Activated CD4-positive, alpha-beta memory T cell treated with anti-CD3 and anti-CD28 coated beads for 36 hours (primary cell): ENCODE measurements at regions of chr6 and their contacts with region 1.

Region 1: DNA sequence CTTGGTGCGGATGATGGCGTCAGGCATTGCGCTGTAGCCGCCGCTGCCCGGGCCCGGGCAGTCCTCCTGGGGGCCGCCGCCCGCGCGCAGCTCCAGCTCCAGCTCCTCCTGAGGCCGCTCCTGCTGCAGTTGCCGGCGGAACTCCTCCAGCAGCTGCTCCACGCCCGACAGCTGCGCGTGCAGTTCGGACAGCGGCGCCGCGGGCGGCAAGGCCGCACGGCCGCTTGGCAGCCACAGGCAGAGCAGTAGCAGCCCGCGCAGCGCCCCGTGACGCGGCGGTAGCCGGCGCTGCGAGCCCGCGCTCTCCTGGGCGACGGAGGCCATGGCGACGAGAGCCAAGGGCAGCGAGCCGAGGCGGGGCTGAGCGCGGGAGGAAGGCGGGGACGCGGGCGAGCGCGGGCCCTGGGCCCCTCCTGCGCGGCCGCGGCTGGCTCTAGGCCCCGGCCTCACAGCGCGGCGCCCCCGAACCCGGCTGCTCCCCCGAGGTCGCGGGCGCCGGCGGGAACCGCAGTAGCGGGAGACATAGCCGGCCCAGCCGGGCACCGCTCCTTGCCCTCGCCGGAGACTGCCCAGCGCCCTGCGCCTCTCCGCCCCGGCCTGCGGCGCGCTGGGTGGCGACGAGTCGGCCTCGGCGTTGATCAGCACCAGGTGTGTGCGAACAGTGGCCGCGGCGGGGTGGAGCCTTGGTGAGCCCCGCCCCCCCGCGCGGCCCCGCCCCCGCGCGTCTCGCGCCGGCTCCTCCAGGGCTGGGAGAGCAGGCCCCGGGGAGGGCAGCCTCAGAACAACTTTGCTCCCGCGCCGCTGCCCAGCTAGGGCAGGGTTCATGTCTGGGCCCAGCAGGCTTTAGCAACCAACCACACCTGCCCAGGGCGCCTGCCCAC is at the start of gene LRP11:
- DNase-seq: peak; percentile 88
- H3K4me3 Mint-ChIP-seq: peak within 1 kb of the TSS; percentile 81
- H3K27ac Mint-ChIP-seq: no peak within 1 kb of the TSS
- H3K4me1 Mint-ChIP-seq: peaks cover 19% of the 10 kb centered on the region
- H3K27me3 Mint-ChIP-seq: peaks cover 2% of the 10 kb centered on the region
- total RNA-seq, gene LRP11: 6.7 to 7.2 TPM

Region 2: DNA sequence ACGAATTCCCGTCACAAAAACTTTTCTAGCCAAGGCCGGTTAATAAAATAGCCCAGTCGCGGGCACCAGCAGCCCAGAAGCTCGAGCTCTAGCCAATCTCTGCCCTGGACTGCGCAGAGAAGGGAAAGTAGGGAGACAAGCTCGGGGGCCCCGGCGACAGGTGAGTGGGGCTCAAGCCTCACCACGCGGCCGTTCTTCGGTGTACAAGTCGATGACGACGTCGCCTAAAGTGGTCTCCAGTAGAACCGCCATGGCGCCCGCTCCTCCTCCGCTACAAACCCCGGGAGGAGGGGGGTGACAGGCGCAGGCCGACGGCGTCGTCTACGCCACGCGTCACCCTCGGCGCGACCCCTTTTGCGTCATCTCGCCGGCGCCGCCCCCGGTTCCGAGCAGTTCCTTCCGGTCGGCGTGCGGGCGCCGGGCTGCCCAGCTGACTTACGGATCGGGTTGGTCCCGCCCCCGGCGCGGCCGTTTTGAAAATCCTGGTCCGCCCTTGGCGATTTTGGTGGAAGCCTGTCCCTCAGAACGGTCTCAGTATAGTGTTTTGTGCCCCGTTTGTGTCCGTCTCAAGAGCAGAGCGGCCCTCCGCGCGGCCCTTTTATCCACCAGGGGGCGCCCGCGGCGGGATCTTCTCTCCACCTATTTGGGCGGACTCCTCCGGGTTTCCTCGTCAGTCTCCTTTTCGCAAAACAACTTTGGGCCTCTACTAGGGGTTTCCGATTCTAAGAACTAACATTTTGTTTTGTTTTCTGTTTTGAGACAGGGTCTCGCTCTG is 318.0 kb before region 1 on chr6 and contains the start of gene PPIL4:
- CTCF ChIA-PET with region 1: no interaction called
- POLR2A ChIA-PET with region 1: interaction called, 3 read pairs
- intact Hi-C with region 1: loop called (anchors 5 kb)
- DNase-seq: peak; percentile 97
- H3K4me3 Mint-ChIP-seq: peak within 1 kb of the TSS; percentile 97
- H3K27ac Mint-ChIP-seq: peak within 1 kb of the TSS; percentile 97
- H3K4me1 Mint-ChIP-seq: peaks cover 38% of the 10 kb centered on the region
- H3K27me3 Mint-ChIP-seq: peaks cover 4% of the 10 kb centered on the region
- total RNA-seq, gene PPIL4: 21.5 to 23.6 TPM

Region 3: GRCh38 chr6:149717588-149718458 is 146.1 kb before region 1 on chr6 and contains the start of gene LATS1:
- CTCF ChIA-PET with region 1: no interaction called
- POLR2A ChIA-PET with region 1: no interaction called
- intact Hi-C with region 1: loop called (anchors 2 kb)
- DNase-seq: peak; percentile 95
- H3K4me3 Mint-ChIP-seq: peak within 1 kb of the TSS; percentile 92
- H3K27ac Mint-ChIP-seq: peak within 1 kb of the TSS; percentile 96
- H3K4me1 Mint-ChIP-seq: peaks cover 31% of the 10 kb centered on the region
- H3K27me3 Mint-ChIP-seq: no peaks in the 10 kb centered on the region
- total RNA-seq, gene LATS1: 19.1 to 20.1 TPM

Region 4: GRCh38 chr6:149834513-149835481 is 29.1 kb before region 1 on chr6:
- CTCF ChIA-PET with region 1: interaction called, 5 read pairs
- POLR2A ChIA-PET with region 1: no interaction called
- intact Hi-C with region 1: loop called (anchors 1 kb)
- DNase-seq: peak; percentile 77
- H3K4me3 Mint-ChIP-seq: no peak overlapping the region
- H3K27ac Mint-ChIP-seq: no peak overlapping the region
- H3K4me1 Mint-ChIP-seq: peaks cover 2% of the 10 kb centered on the region
- H3K27me3 Mint-ChIP-seq: no peaks in the 10 kb centered on the region

Region 5: GRCh38 chr6:149925974-149926777 is 62.2 kb after region 1 on chr6:
- CTCF ChIA-PET with region 1: interaction called, 3 read pairs
- POLR2A ChIA-PET with region 1: no interaction called
- intact Hi-C with region 1: loop called (anchors 1 kb)
- DNase-seq: peak; percentile 90
- H3K4me3 Mint-ChIP-seq: peak overlapping the region; percentile 51
- H3K27ac Mint-ChIP-seq: no peak overlapping the region
- H3K4me1 Mint-ChIP-seq: peaks cover 26% of the 10 kb centered on the region
- H3K27me3 Mint-ChIP-seq: peaks cover 83% of the 10 kb centered on the region